Prostate gland (tissue), 2 donors: ENCODE measurements at regions of chr12 and their contacts with region 1.

Region 1: GRCh38 chr12:132003846-132004245 is 54.1 kb downstream of the EP400 start:
- DNase-seq: no peak
- H3K4me3 ChIP-seq: no peak overlapping the region
- H3K27ac ChIP-seq: no peak overlapping the region
- H3K4me1 ChIP-seq: no peaks in the 10 kb centered on the region
- H3K27me3 ChIP-seq: no peaks in the 10 kb centered on the region
- CTCF ChIP-seq: no peak
- POLR2A ChIP-seq: no peak

Region 2: DNA sequence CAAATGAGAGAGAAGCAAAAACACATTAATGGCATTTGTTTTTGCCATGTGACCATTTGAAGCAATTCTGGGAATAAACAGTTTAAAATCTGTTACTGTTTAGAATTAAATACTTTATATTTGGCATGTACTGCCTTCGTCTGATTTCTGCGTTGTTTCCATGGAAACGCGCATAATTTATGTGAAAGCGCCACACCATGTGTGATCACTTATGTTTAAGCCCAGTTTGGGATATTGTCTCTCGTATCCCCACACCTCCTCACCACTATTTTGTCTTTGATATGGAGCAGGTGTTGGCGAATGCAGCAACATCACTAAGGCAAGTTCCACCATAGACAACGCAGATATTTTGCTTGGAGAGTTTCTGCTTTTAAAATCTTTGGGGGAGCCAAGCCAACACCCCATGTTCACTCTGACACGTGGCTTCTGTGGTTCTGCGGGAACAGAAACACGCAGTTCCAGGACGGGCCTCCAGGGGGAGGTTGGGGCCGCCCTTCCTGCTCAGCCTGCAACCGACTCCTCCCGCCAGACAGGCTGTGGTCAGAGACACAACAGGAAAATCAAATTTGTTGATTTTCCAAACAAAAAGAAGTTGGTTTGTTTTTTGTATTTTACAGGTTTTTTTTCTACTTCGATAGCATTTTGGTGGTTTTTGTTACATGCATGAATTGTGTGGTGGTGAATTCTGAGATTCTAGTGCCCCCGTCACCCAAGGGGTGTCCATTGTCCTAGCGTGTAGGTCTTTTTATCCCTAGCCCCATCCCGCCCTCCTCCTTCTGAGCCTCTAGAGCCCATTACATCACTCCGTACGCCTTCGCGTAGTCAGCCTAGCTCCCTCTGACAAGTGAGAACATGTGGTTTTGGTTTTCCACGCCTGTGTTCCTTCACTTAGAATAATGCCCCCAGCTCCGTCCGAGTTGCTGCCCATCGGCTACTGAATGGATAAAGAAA is 394.8 kb before region 1 on chr12:
- intact Hi-C with region 1: loop called (anchors 10 kb)
- DNase-seq: peak; percentile 28
- H3K4me3 ChIP-seq: no peak overlapping the region
- H3K27ac ChIP-seq: no peak overlapping the region
- H3K4me1 ChIP-seq: no peaks in the 10 kb centered on the region
- H3K27me3 ChIP-seq: peaks cover 1% of the 10 kb centered on the region
- CTCF ChIP-seq: peak; percentile 46 to 66 (median 61)
- POLR2A ChIP-seq: no peak

Region 3: GRCh38 chr12:131710464-131711457 is 293.1 kb before region 1 on chr12 and contains the start of gene SFSWAP:
- intact Hi-C with region 1: no loop called
- DNase-seq: peak; percentile 51
- H3K4me3 ChIP-seq: peak within 1 kb of the TSS; percentile 66 to 97
- H3K27ac ChIP-seq: peak within 1 kb of the TSS; percentile 84 to 85
- H3K4me1 ChIP-seq: peaks cover 11% of the 10 kb centered on the region
- H3K27me3 ChIP-seq: no peaks in the 10 kb centered on the region
- CTCF ChIP-seq: peak in 1 of 4 experiments; percentile 34
- POLR2A ChIP-seq: no peak
- total RNA-seq, gene SFSWAP: 24.5 to 53.9 TPM

Region 4: GRCh38 chr12:131850856-131851559 is 152.8 kb before region 1 on chr12:
- intact Hi-C with region 1: loop called (anchors 5 kb)
- DNase-seq: peak; percentile 27
- H3K4me3 ChIP-seq: no peak overlapping the region
- H3K27ac ChIP-seq: no peak overlapping the region
- H3K4me1 ChIP-seq: no peaks in the 10 kb centered on the region
- H3K27me3 ChIP-seq: peaks cover 5% of the 10 kb centered on the region
- CTCF ChIP-seq: peak in 3 of 4 experiments; percentile 50 to 70 (median 65)
- POLR2A ChIP-seq: no peak